Pancreas (tissue), 10 donors: ENCODE measurements at regions of chr15 and their contacts with region 1.

Region 1: GRCh38 chr15:78195735-78196201 is 38.6 kb downstream of the ACSBG1 start:
- DNase-seq: peak in 2 of 6 donors; percentile 15 to 48
- ATAC-seq: peak; percentile 82 to 98 (median 93)
- H3K4me3 ChIP-seq: no peak overlapping the region
- H3K27ac ChIP-seq: no peak overlapping the region
- H3K4me1 ChIP-seq: no peaks in the 10 kb centered on the region
- H3K27me3 ChIP-seq: no peaks in the 10 kb centered on the region
- CTCF ChIP-seq: peak; percentile 56 to 73 (median 66)

Region 2: DNA sequence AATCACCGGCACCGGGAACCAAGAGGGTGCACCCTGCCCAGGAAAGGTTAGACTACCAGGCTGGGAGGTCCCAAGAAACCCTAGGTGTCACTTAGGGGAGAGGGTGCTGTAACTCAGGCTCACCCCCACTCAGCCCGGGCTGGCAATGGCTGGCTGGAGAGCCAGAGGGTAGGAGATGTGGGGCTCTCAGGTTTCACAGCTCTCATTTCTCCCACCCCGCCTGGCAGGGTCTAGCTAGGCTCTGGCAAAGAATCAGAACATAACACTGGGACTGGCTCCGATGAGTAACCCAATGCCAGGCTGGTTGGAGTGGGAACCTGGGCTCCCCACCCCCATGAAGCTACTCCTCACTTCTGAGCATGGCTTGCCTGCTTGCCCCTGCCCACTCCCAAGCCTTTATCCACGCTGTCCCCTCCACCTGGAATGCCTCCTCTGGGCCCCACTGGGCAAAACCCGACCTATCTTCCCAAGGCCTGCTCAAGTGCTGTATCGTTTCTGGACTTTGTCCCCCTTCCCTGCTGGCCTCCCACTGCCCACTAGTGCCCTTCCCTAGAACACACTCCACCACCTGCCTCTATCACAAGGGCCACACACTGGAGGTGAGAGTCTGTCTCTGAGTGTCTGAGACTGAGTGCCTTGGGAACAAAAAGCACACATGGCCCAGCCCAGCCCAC is 66.6 kb before region 1 on chr15:
- intact Hi-C with region 1: loop called in 1 of 3 experiments (anchors 10 kb)
- DNase-seq: peak in 1 of 6 donors; percentile 34
- ATAC-seq: no peak
- H3K4me3 ChIP-seq: no peak overlapping the region
- H3K27ac ChIP-seq: no peak overlapping the region
- H3K4me1 ChIP-seq: peaks cover 0 to 8% (median 0%) of the 10 kb centered on the region in 3 donors
- H3K27me3 ChIP-seq: no peaks in the 10 kb centered on the region
- CTCF ChIP-seq: no peak